ENCODE measurements at regions of chr2 and their contacts with region 1.

Region 1: DNA sequence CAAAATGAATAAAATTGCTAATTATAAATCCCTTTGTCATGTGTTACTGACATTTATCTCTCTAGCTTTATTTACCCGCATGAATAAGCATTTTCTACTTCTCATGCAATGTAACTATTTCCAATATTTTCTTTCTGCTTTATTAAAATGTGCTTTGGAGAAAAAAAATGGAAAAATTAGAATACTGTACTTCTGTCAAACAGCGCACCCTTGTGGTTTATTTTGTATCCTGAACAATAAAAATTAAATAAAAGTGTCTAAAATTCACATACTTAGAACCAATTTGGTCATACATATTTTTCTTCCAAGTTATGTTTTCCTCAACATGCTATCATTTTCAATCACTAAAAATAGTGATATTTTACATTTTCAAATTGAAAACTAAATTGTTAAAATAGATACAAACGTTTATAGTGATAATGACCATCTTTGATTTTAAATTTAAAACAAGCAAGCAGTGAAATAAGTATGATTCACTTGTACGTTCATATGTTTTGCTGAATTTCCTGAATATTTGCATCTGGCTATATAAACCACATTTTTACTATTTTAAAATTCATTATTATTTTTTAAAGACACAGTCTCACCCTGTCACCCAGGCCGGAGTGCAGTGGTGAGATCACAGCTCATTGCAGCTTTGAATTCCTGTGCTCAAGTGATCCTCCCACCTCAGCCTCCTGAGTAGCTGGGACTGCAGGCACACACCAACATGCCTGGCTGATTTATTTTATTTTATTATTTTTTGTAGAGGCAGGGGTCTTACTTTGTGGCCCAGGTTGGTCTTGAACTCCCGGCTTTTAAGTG is 95.9 kb upstream of the GRB14 start:
- DNase-seq: no peak
- H3K4me3 ChIP-seq: no peak overlapping the region
- H3K27ac ChIP-seq: no peak overlapping the region
- H3K27me3 ChIP-seq: no peaks in the 10 kb centered on the region
- CTCF ChIP-seq: peak; percentile 56

Region 2: DNA sequence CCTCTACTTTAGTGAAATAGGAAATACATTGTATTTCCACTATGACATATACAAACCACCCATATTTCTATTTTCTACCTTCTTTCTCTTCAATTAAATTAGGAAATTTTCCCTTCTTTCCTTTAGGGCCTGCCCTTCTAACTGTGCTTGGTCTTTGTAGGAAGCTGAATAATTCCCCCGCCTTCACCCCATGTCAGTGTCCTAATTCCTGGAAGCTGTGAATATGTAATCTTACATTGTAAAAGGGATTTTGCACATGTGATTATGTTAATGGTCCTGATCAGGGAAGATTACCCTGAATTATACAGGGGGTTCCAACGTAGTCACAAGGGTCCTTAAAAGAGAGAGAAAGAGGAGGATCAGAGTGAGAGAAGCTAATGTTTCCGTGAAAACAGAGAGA is 136.2 kb before region 1 on chr2:
- CTCF ChIA-PET with region 1: no interaction called
- POLR2A ChIA-PET with region 1: no interaction called
- DNase-seq: no peak
- H3K4me3 ChIP-seq: no peak overlapping the region
- H3K27ac ChIP-seq: no peak overlapping the region
- H3K27me3 ChIP-seq: no peaks in the 10 kb centered on the region
- CTCF ChIP-seq: no peak

Region 3: GRCh38 chr2:164706522-164706921 is 10.7 kb before region 1 on chr2:
- CTCF ChIA-PET with region 1: interaction called, 26 read pairs
- POLR2A ChIA-PET with region 1: no interaction called
- DNase-seq: no peak
- H3K4me3 ChIP-seq: no peak overlapping the region
- H3K27ac ChIP-seq: no peak overlapping the region
- H3K27me3 ChIP-seq: no peaks in the 10 kb centered on the region
- CTCF ChIP-seq: no peak

Region 4: DNA sequence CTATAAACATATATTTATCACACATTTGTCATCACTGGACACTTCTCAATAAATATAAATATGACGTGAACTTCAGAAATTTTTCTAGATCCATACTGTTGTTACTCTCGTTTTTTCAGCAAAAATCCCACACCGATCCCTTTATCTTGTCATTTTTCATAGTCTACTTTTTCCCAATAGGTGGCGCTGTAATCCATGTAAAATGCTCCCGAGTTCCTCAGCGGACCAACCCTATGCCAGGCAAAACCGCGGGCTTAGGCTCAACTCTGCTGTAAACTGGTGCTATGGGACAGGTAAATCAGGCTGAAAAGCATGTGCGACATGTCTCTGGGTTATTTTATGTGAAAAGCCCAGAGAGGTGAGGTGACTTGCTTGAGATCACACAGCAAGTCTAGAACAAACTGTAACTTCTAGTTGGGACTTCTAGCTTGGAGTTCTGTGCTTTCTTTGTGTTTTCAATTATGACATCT is 20.4 kb after region 1 on chr2:
- CTCF ChIA-PET with region 1: interaction called, 11 read pairs
- POLR2A ChIA-PET with region 1: no interaction called
- DNase-seq: peak; percentile 23
- H3K4me3 ChIP-seq: no peak overlapping the region
- H3K27ac ChIP-seq: no peak overlapping the region
- H3K27me3 ChIP-seq: no peaks in the 10 kb centered on the region
- CTCF ChIP-seq: peak; percentile 79